Gastrocnemius medialis (tissue), 4 donors: ENCODE measurements at regions of chr10 and their contacts with region 1.

Region 1: GRCh38 chr10:20240643-20241042 is 424.4 kb downstream of the PLXDC2 start:
- DNase-seq: no peak
- ATAC-seq: no peak
- H3K4me3 ChIP-seq: no peak overlapping the region
- H3K27ac ChIP-seq: no peak overlapping the region
- H3K4me1 ChIP-seq: no peaks in the 10 kb centered on the region
- H3K27me3 ChIP-seq: no peaks in the 10 kb centered on the region
- CTCF ChIP-seq: no peak
- POLR2A ChIP-seq: no peak

Region 2: GRCh38 chr10:20535897-20536881 is 295.5 kb after region 1 on chr10:
- in situ Hi-C with region 1: no loop called
- intact Hi-C with region 1: loop called (anchors 5 kb)
- DNase-seq: no peak
- ATAC-seq: no peak
- H3K4me3 ChIP-seq: no peak overlapping the region
- H3K27ac ChIP-seq: no peak overlapping the region
- H3K4me1 ChIP-seq: no peaks in the 10 kb centered on the region
- H3K27me3 ChIP-seq: no peaks in the 10 kb centered on the region
- CTCF ChIP-seq: no peak
- POLR2A ChIP-seq: no peak